ENCODE measurements at regions of chr6 and their contacts with region 1.

Region 1: DNA sequence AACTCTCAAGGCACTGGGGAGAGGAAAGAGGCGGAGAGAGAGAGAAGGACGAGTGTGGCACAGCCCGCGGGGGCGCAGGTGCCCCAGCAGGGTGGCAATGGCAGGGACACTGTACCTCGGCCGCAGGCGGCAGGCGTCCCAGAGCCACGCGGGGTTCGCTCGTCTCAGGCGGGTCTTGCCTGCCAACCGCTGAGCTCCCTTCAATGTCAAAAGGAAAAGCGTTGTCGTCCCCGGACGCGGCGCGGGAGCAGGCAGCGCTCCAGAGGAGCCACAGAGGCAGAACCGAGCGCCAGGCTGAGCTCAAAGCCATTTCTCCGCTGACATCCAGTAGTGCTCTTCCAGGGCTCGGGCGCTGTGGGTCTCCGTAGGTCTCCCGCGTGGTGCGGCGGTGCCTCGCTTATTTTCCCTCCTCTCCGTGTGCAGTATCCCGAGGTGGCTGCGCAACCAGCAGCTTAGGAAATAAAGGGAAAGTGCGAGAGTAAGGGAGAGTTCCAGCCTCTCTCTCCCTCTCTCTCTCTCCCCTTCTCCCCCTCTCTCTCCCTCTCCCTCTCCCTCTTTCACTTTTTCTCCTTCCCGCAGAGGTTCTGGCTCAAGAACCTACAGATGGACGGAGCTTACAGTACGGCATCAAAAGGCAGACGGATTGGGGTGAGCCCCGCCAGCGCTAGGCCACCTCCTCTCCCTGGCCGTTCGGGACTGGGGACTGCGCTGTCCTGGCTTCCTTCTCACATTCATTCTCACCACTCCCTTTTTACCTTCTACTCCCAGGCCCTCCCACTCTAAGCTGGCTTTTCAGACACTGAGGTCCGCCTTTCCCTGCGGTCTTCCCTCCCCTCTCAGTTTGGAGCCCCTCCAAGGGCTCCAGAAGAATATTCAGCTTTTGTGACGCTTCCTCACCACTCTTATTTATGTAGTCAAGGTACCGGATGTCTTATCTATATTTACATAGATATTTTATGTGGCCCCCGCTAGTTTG is at the start of gene LAMA4:
- DNase-seq: peak; percentile 59
- H3K4me3 Mint-ChIP-seq: peak within 1 kb of the TSS; percentile 88
- H3K27ac Mint-ChIP-seq: peak within 1 kb of the TSS; percentile 98
- H3K4me1 Mint-ChIP-seq: peaks cover 43% of the 10 kb centered on the region
- H3K27me3 Mint-ChIP-seq: no peaks in the 10 kb centered on the region
- CTCF ChIP-seq: no peak
- total RNA-seq, gene LAMA4: 85.8 and 89.9 TPM in 2 replicates

Region 2: GRCh38 chr6:112203577-112204349 is 50.4 kb before region 1 on chr6:
- CTCF ChIA-PET with region 1: interaction called, 3 read pairs
- intact Hi-C with region 1: loop called (anchors 1 kb)
- DNase-seq: peak; percentile 9
- H3K4me3 Mint-ChIP-seq: peak overlapping the region; percentile 58
- H3K27ac Mint-ChIP-seq: peak overlapping the region; percentile 94
- H3K4me1 Mint-ChIP-seq: peaks cover 69% of the 10 kb centered on the region
- H3K27me3 Mint-ChIP-seq: no peaks in the 10 kb centered on the region
- CTCF ChIP-seq: no peak

Region 3: DNA sequence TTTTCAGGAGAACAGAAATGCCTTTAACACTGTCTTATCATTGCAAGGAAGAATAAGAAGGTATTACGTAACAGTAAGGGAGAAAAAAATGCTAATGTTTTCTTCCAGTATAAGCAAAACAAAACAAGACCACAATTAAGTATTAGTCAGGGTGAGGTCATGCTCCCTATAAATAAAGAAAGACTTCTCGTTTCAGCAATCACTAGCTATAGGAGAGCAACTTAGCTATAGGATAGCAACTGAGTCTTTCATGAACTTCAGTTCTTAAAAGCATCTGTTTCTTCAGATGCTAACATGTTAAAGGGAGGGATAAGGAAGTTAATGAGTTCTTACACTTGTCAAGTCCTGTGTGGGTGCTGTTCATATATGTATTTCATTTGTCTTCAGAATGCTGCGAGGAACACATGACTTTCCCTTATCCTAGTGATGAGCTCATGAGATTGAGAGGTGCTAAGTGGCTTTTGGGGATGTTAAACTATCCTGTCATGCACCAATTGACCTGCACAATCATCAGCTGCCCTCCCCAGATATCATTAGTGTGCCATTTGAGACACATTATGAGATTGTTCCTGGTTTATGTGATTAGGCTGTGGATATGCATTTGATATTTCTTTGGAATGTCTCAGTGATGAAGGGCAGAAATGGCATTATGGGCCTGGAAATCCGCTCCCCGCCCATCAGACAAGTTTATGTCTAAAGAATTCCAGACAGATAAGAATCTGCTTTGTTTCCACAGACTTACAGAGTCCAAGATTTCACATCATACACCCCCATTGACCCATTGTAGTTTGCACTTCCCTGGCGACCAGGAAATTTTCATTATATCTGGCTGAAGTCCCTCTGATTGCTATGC is 37.2 kb before region 1 on chr6:
- CTCF ChIA-PET with region 1: interaction called, 4 read pairs
- intact Hi-C with region 1: loop called (anchors 5 kb)
- DNase-seq: peak; percentile 10
- H3K4me3 Mint-ChIP-seq: no peak overlapping the region
- H3K27ac Mint-ChIP-seq: peak overlapping the region; percentile 75
- H3K4me1 Mint-ChIP-seq: peaks cover 49% of the 10 kb centered on the region
- H3K27me3 Mint-ChIP-seq: no peaks in the 10 kb centered on the region
- CTCF ChIP-seq: no peak

Region 4: GRCh38 chr6:112311950-112312547 is 57.9 kb after region 1 on chr6:
- CTCF ChIA-PET with region 1: interaction called, 3 read pairs
- intact Hi-C with region 1: loop called (anchors 5 kb)
- DNase-seq: no peak
- H3K4me3 Mint-ChIP-seq: no peak overlapping the region
- H3K27ac Mint-ChIP-seq: no peak overlapping the region
- H3K4me1 Mint-ChIP-seq: peaks cover 11% of the 10 kb centered on the region
- H3K27me3 Mint-ChIP-seq: no peaks in the 10 kb centered on the region
- CTCF ChIP-seq: peak; percentile 60

Region 5: GRCh38 chr6:112967974-112968373 is 713.8 kb after region 1 on chr6:
- CTCF ChIA-PET with region 1: no interaction called
- intact Hi-C with region 1: no loop called
- DNase-seq: no peak
- H3K4me3 Mint-ChIP-seq: no peak overlapping the region
- H3K27ac Mint-ChIP-seq: no peak overlapping the region
- H3K4me1 Mint-ChIP-seq: no peaks in the 10 kb centered on the region
- H3K27me3 Mint-ChIP-seq: no peaks in the 10 kb centered on the region
- CTCF ChIP-seq: no peak